GM18951 (cell line): ENCODE measurements at regions of chr5 and their contacts with region 1.

Region 1: GRCh38 chr5:131109540-131110255 is 55.4 kb downstream of the HINT1 start:
- POLR2A ChIP-seq: no peak

Region 2: DNA sequence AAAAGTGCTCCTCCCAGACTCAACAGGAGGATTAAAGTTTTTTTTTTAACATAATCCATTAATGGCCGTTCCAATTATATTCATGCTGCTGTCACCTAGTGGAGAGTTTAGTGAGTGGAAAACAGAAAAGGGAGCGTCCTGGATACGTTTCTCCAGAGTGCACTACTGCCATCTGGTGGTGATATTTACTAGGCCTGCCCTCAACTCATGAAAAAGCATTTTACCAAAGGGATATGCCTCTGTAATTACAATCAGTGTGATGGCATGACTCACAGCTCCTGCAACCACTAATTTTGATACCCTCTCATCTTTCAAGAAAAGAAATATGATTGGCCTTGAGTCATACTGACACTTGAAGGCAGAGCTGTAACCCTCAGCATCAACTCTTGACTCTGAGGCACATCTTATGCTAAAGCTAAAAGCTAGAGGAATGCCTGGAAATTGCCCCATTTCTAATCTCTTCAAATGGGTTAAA is 1341.8 kb before region 1 on chr5:
- in situ Hi-C with region 1: loop called (anchors 10 kb)
- POLR2A ChIP-seq: no peak

Region 3: GRCh38 chr5:130871346-130872086 is 238.2 kb before region 1 on chr5:
- in situ Hi-C with region 1: loop called (anchors 25 kb)
- POLR2A ChIP-seq: no peak

Region 4: GRCh38 chr5:131622633-131623032 is 512.9 kb after region 1 on chr5:
- in situ Hi-C with region 1: no loop called
- POLR2A ChIP-seq: no peak